ENCODE measurements at regions of chr3 and their contacts with region 1.

Region 1: DNA sequence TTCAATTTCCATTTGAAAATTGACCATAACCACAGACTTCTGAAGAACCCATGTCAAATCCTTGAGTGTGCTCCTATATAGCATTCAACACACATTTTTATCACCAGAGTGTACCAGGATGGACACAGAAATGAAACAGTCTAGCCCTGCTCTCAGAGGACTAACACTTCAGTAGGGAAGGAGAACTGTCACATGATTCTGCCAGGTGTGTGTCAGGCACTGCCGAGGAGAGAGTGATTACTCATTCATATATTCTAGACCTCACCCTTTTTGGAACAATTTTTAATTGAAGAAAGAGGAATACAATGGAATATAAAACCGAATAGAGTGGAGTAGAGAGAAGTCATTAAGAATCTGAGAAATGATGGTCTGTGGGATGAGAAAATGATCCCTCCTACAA is 125.8 kb downstream of the ERC2 start:
- DNase-seq: no peak
- ATAC-seq: no peak

Region 2: DNA sequence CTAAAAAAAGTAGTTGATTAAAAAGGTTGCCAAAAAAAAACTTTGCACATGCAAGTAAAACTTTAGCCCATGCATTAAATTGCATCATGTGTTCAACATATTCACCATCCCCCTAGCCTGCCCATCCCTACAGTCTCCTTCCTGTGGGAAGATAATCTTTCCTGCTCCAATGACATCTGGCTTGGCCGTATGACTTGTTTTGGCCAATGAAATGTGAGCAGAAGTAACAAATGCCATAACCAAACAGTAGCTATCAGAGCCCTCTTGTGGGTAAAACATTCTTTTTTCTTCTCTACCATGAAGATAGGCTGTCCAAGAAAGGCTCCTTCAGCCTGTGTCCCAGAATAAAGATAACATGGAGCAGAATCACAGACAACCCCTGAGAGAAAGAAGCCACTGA is 110.5 kb after region 1 on chr3:
- intact Hi-C with region 1: loop called (anchors 5 kb)
- DNase-seq: no peak
- ATAC-seq: no peak

Region 3: GRCh38 chr3:56494686-56495322 is 152.3 kb after region 1 on chr3:
- intact Hi-C with region 1: loop called (anchors 5 kb)
- DNase-seq: peak; percentile 70
- ATAC-seq: peak; percentile 77

Region 4: GRCh38 chr3:57141719-57142410 is 799.4 kb after region 1 on chr3:
- intact Hi-C with region 1: no loop called
- DNase-seq: no peak
- ATAC-seq: no peak

Measured in Right ventricle myocardium inferior (tissue), 1 donor.